K562 (cell line): ENCODE measurements at regions of chrX and their contacts with region 1.

Region 1: DNA sequence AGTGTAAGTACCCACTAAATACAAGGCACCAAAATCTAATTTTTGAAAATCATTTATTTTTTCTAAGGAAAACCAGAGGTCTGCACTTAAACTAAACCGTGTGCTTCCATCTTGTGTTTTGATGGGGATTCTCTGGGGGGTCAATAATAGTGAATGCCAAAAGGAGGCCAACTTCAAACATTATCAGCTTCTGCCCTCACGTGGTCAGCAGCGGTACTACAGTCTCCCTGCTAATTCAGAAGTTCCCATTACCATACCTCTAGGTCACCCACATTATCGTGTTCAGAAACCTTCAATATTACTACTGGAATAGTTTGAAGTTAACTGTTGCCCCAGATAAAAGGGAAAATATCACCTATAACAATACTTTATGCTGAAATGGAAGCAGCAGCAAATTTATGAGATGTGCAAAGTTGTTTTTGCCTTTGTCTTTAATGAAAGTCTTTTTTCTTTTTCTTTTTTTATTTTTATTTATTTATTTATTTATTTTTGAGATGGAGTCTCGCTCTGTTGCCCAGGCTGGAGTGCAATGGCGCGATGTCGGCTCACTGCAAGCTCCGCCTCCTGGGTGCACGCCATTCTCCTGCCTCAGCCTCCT is 17.3 kb downstream of the CTPS2 start:
- DNase-seq: peak; percentile 48 to 67 (median 57)
- ATAC-seq: peak; percentile 87
- H3K4me3 ChIP-seq: no peak overlapping the region
- H3K27ac ChIP-seq: no peak overlapping the region
- H3K4me1 ChIP-seq: no peaks in the 10 kb centered on the region
- H3K27me3 ChIP-seq: no peaks in the 10 kb centered on the region
- CTCF ChIP-seq: peak; percentile 69 to 83 (median 78)
- EP300 ChIP-seq: no peak
- POLR2A ChIP-seq: no peak
- RAD21 ChIP-seq: peak; percentile 53 to 71

Region 2: GRCh38 chrX:16436348-16437188 is 258.6 kb before region 1 on chrX:
- CTCF ChIA-PET with region 1: interaction called, 3 read pairs
- POLR2A ChIA-PET with region 1: no interaction called
- in situ Hi-C with region 1: loop called (anchors 25 kb)
- intact Hi-C with region 1: loop called (anchors 5 kb)
- DNase-seq: peak; percentile 48 to 79 (median 62)
- ATAC-seq: peak; percentile 100
- H3K4me3 ChIP-seq: no peak overlapping the region
- H3K27ac ChIP-seq: no peak overlapping the region
- H3K4me1 ChIP-seq: no peaks in the 10 kb centered on the region
- H3K27me3 ChIP-seq: no peaks in the 10 kb centered on the region
- CTCF ChIP-seq: peak; percentile 69 to 81 (median 74)
- EP300 ChIP-seq: no peak
- POLR2A ChIP-seq: no peak
- RAD21 ChIP-seq: peak; percentile 38 to 63; a peak in 3 of 4 replicates